BJ (cell line): ENCODE measurements at regions of chr1 and their contacts with region 1.

Region 1: GRCh38 chr1:32876341-32877210 is 5.9 kb upstream of the FNDC5 start:
- DNase-seq: no peak
- H3K4me3 ChIP-seq: no peak overlapping the region
- H3K27me3 ChIP-seq: peaks cover 4% of the 10 kb centered on the region; the same call in 1 of the 2 replicates
- CTCF ChIP-seq: peak; percentile 93

Region 2: DNA sequence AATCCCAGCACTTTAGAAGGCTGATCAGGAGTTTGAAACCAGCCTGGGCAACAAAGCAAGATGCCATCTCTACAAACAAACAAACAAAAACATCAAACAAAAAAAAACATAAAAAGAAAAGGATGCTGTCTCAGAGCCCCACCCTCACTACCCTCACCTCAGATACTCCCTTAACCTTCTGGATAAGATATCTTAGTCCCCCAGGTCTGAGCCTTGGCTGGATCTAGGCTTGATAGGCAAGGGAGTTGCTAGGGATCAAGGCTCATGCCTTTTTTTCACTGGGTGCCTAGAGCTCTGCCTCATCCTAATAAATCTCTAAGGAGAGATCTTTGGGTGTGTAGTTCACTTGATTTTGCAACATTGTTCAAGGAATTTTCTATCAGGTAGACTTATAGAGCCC is 577.2 kb before region 1 on chr1:
- CTCF ChIA-PET with region 1: no interaction called
- POLR2A ChIA-PET with region 1: no interaction called
- DNase-seq: no peak
- H3K4me3 ChIP-seq: no peak overlapping the region
- H3K27me3 ChIP-seq: no peaks in the 10 kb centered on the region
- CTCF ChIP-seq: no peak

Region 3: GRCh38 chr1:32521165-32521564 is 355.4 kb before region 1 on chr1:
- CTCF ChIA-PET with region 1: interaction called, 53 read pairs
- POLR2A ChIA-PET with region 1: no interaction called
- DNase-seq: no peak
- H3K4me3 ChIP-seq: no peak overlapping the region
- H3K27me3 ChIP-seq: no peaks in the 10 kb centered on the region
- CTCF ChIP-seq: no peak

Region 4: GRCh38 chr1:32716312-32717148 is 160.0 kb before region 1 on chr1:
- CTCF ChIA-PET with region 1: interaction called, 16 read pairs
- POLR2A ChIA-PET with region 1: no interaction called
- DNase-seq: no peak
- H3K4me3 ChIP-seq: no peak overlapping the region
- H3K27me3 ChIP-seq: no peaks in the 10 kb centered on the region
- CTCF ChIP-seq: no peak

Region 5: DNA sequence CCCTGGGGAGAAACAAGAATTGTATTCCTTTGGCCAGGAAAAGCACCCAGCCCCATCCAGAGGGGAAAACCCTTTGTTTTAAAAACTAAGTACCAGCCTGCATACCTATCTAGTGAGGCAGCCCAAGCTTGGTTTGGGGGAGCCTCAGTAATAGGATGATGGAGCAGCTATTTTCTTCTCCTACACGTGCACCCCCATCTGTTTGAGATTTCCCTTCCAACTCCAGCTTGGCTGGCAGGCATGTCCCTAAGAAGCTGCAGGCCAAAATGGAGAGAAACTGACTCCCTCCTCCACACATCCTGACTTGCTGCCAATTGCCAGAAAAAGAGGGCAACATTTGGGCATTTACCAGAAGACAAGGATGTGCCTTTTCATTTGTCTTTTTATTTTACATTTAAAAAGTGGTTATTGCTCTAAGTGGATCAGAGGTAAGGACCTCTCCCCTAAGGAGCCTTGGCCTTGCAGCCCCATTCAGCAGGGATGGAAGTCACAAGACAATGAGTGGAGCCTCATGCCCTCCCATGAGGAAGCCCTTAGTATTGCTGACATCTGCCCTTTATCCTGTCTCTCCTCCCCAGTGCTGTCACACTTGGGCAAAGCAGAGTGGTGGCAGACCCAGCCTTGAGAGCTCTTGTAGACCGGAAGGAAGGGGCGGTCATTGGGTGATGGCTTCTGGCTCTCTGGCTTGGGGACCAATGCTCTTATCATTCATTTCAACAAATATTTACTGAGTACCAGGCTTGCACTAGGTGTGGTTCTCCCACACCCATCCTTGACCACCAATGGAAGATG is 14.5 kb before region 1 on chr1:
- CTCF ChIA-PET with region 1: interaction called, 33 read pairs
- POLR2A ChIA-PET with region 1: no interaction called
- DNase-seq: no peak
- H3K4me3 ChIP-seq: no peak overlapping the region
- H3K27me3 ChIP-seq: no peaks in the 10 kb centered on the region
- CTCF ChIP-seq: no peak

Region 6: GRCh38 chr1:32892368-32893197 is 16.0 kb after region 1 on chr1:
- CTCF ChIA-PET with region 1: interaction called, 43 read pairs
- POLR2A ChIA-PET with region 1: no interaction called
- DNase-seq: no peak
- H3K4me3 ChIP-seq: peak overlapping the region; percentile 37
- H3K27me3 ChIP-seq: peaks cover 8% of the 10 kb centered on the region
- CTCF ChIP-seq: peak; percentile 29; the same call in 1 of the 2 replicates

Region 7: DNA sequence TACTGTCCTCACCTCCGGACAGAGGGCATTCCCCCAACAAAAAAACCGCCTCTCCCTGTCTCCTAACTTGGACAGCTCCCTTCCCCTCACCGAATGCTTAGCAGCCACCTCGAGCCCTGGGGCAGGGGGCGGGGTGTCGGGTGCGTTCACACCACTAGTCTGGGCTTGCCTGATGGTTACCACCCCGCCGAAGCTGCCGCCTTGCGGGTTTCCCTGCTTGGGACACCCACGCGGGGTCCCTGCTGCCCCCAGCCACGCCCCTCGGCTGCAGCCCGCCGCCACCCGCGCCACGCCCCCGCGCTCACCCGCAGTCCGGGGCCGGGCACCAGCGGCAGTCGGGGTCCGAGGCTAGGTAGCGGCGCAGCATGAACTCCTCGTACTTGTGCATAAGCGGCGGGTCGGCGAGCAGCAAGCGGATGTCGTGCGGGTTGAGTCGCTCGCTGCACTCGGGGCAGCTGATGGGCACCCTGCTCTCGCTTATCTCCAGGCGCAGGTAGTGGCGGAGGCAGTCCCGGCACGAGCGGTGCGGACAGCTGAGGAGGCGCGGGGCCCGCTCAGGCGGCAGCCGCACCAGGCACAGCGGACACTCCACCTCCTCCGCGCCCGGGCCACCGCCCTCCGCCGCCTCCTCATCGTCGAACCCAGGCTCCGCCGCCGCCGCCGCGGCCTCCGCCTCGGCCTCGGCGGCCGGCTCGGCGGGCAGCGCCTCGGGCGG is 87.3 kb after region 1 on chr1:
- CTCF ChIA-PET with region 1: no interaction called
- POLR2A ChIA-PET with region 1: no interaction called
- DNase-seq: no peak
- H3K4me3 ChIP-seq: peak overlapping the region; percentile 87
- H3K27me3 ChIP-seq: no peaks in the 10 kb centered on the region
- CTCF ChIP-seq: no peak

Region 8: GRCh38 chr1:33055210-33056008 is 178.8 kb after region 1 on chr1:
- CTCF ChIA-PET with region 1: interaction called, 12 read pairs
- POLR2A ChIA-PET with region 1: no interaction called
- DNase-seq: no peak
- H3K4me3 ChIP-seq: no peak overlapping the region
- H3K27me3 ChIP-seq: no peaks in the 10 kb centered on the region
- CTCF ChIP-seq: peak; percentile 79

Region 9: GRCh38 chr1:33086384-33086850 is 209.8 kb after region 1 on chr1:
- CTCF ChIA-PET with region 1: interaction called, 55 read pairs
- POLR2A ChIA-PET with region 1: interaction called, 5 read pairs
- DNase-seq: no peak
- H3K4me3 ChIP-seq: no peak overlapping the region
- H3K27me3 ChIP-seq: no peaks in the 10 kb centered on the region
- CTCF ChIP-seq: peak; percentile 87